ENCODE measurements at regions of chr1 and their contacts with region 1.

Region 1: GRCh38 chr1:81314513-81315233 is 486.1 kb upstream of the ADGRL2 start:
- DNase-seq: no peak
- ATAC-seq: peak; percentile 64

Region 2: DNA sequence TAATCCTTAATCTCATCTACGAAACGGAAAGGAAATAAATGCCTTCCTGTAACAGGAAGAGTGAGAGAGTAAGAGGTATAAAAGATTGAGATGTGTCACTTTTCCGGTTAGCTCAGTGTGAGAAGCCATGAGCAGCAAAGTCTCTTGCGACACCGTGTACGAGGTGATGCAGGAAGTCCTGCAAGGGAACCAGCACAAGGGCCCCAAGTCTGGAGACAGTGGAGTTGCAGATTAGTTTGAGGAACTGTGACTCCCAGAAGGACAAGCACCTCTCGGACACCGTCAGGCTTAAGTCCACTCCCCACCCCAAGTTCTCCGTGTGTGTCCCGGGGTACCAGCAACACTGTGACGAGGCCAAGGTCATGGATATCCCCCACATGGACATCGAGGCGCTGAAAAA is 106.2 kb before region 1 on chr1:
- intact Hi-C with region 1: no loop called
- DNase-seq: peak; percentile 45
- ATAC-seq: no peak

Region 3: GRCh38 chr1:81225789-81226602 is 88.7 kb before region 1 on chr1:
- intact Hi-C with region 1: loop called (anchors 10 kb)
- DNase-seq: no peak
- ATAC-seq: peak; percentile 17